ENCODE measurements at regions of chr10 and their contacts with region 1.

Region 1: GRCh38 chr10:89217057-89217990 is 10.2 kb upstream of the CH25H start:
- DNase-seq: peak; percentile 74
- ATAC-seq: peak; percentile 79
- H3K4me3 ChIP-seq: no peak overlapping the region
- H3K27ac ChIP-seq: no peak overlapping the region
- H3K4me1 ChIP-seq: no peaks in the 10 kb centered on the region
- H3K27me3 ChIP-seq: no peaks in the 10 kb centered on the region
- CTCF ChIP-seq: peak; percentile 78
- POLR2A ChIP-seq: no peak
- RAD21 ChIP-seq: peak; percentile 69

Region 2: GRCh38 chr10:88565072-88565471 is 652.3 kb before region 1 on chr10:
- CTCF ChIA-PET with region 1: no interaction called
- POLR2A ChIA-PET with region 1: no interaction called
- dilution Hi-C with region 1: no loop called
- in situ Hi-C with region 1: no loop called
- intact Hi-C with region 1: loop called (anchors 5 kb)
- DNase-seq: peak; percentile 61
- ATAC-seq: peak; percentile 85
- H3K4me3 ChIP-seq: no peak overlapping the region
- H3K27ac ChIP-seq: no peak overlapping the region
- H3K4me1 ChIP-seq: no peaks in the 10 kb centered on the region
- H3K27me3 ChIP-seq: no peaks in the 10 kb centered on the region; the same call in 1 of the 2 replicates
- CTCF ChIP-seq: peak; percentile 63
- POLR2A ChIP-seq: no peak
- RAD21 ChIP-seq: peak; percentile 74

Region 3: DNA sequence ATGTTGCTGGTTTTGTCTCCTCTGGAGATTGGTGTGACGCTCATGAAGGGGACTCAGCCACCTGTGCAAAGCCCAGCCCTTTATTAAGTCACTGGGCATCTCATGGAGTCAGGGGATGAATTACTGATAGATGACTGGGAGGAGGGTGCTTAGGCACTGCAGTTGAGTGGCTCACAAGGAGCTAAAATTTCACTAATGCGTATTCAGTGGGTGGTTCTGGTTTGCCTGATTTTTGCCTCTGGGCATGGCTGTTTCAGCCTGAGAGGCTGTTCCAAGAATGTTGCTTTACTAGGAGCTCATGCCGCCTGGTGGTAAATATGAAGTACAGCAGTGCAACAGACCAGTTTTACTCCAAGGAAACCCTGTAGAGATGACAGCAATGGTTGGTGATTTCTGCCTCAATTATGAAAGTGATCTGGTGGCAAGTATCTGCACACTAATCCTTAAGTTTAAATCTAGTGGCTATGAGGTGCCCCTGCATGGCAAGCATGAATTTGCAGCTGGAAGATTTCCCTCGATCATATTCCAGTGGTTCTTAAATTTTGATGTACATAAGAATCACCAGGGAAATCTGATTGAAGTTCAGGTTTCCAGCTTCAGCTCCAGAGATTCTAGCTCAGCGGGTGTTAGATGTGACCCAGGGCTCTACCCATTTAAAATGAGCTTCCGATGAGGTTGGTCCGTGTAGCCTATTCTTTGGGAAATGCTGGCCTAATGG is 284.6 kb before region 1 on chr10:
- CTCF ChIA-PET with region 1: interaction called, 4 read pairs
- POLR2A ChIA-PET with region 1: no interaction called
- dilution Hi-C with region 1: no loop called
- in situ Hi-C with region 1: no loop called
- intact Hi-C with region 1: loop called (anchors 1 kb)
- DNase-seq: peak; percentile 87
- ATAC-seq: peak; percentile 74
- H3K4me3 ChIP-seq: no peak overlapping the region
- H3K27ac ChIP-seq: peak overlapping the region; percentile 52
- H3K4me1 ChIP-seq: peaks cover 4% of the 10 kb centered on the region
- H3K27me3 ChIP-seq: no peaks in the 10 kb centered on the region
- CTCF ChIP-seq: peak; percentile 95
- POLR2A ChIP-seq: no peak
- RAD21 ChIP-seq: peak; percentile 91

Region 4: DNA sequence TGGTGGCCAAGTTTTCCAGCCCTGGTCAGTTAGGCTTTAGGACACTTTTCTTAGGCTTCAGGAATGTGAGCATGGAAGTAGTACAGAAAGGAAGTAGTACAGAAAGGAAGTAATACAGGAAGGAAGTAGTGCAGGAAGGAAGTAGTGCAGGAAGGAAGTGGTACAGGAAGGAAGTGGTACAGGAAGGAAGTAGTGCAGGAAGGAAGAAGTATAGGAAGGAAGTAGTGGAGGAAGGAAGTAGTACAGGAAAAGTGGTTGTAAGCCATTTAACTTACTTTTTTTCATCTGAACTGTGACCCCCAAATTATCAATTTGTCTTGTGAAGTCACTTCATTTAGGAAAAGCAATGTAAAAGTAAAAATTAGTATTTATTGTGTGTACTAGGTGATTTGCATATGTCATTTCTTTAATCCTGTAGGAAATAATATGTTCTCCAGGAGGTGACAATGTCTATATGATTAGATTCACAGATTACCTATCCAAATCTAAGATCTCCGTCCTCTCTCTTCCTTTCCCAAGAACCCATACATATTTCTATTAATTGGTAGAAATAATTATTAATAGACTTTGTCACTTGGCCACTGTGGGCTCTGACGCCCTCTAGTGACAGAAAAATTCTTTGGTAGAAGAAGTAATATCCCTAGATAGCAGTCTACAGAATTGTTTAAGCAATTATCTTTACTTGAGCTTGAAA is 230.6 kb before region 1 on chr10:
- CTCF ChIA-PET with region 1: interaction called, 5 read pairs
- POLR2A ChIA-PET with region 1: no interaction called
- dilution Hi-C with region 1: no loop called
- in situ Hi-C with region 1: no loop called
- intact Hi-C with region 1: loop called (anchors 1 kb)
- DNase-seq: peak; percentile 37
- ATAC-seq: no peak
- H3K4me3 ChIP-seq: no peak overlapping the region
- H3K27ac ChIP-seq: no peak overlapping the region
- H3K4me1 ChIP-seq: peaks cover 8% of the 10 kb centered on the region
- H3K27me3 ChIP-seq: no peaks in the 10 kb centered on the region
- CTCF ChIP-seq: peak; percentile 82
- POLR2A ChIP-seq: no peak
- RAD21 ChIP-seq: peak; percentile 77

Region 5: GRCh38 chr10:89029785-89030437 is 187.4 kb before region 1 on chr10:
- CTCF ChIA-PET with region 1: interaction called, 10 read pairs
- POLR2A ChIA-PET with region 1: no interaction called
- dilution Hi-C with region 1: no loop called
- in situ Hi-C with region 1: loop called (anchors 5 kb)
- intact Hi-C with region 1: loop called (anchors 1 kb)
- DNase-seq: peak; percentile 84
- ATAC-seq: peak; percentile 57
- H3K4me3 ChIP-seq: no peak overlapping the region
- H3K27ac ChIP-seq: no peak overlapping the region
- H3K4me1 ChIP-seq: peaks cover 16% of the 10 kb centered on the region
- H3K27me3 ChIP-seq: no peaks in the 10 kb centered on the region
- CTCF ChIP-seq: peak; percentile 92
- POLR2A ChIP-seq: no peak
- RAD21 ChIP-seq: peak; percentile 95

Measured in IMR-90 (cell line).